ENCODE measurements at regions of chr12 and their contacts with region 1.

Region 1: DNA sequence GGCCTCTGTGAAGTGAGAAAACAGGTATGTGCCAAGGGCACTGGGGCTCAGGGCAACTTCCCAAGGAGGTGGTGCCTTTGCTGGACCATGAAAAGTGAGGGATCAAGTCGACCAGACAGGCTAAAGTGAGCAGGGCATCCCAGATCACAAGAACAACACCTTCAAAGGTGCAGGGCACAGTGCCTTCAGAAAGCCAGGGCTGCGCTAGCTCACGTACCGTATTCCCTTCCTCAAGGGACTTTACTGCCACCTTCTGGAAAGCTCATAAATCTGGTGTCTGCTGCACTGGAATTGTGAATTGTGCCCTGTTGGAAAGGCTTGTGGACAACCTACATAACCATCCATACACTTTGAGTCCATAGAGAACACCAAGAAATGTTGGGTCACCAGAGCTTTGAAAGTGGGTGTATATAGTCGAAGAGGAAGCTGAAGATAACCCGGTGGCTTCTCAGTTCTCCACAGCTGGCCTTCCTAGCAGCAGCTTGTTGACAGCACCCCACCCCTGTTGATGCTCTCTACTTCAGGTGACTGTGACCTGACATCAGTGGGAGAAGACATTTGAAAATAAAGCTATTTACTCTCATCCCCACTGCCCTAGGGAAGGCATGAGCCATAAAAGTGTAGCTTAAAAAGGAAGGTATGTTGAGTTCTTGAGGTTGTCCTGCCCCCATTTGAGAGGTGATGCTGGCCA is 24.5 kb downstream of the FIGNL2 start:
- DNase-seq: peak; percentile 53
- H3K27ac ChIP-seq: no peak overlapping the region
- CTCF ChIP-seq: peak; percentile 64

Region 2: DNA sequence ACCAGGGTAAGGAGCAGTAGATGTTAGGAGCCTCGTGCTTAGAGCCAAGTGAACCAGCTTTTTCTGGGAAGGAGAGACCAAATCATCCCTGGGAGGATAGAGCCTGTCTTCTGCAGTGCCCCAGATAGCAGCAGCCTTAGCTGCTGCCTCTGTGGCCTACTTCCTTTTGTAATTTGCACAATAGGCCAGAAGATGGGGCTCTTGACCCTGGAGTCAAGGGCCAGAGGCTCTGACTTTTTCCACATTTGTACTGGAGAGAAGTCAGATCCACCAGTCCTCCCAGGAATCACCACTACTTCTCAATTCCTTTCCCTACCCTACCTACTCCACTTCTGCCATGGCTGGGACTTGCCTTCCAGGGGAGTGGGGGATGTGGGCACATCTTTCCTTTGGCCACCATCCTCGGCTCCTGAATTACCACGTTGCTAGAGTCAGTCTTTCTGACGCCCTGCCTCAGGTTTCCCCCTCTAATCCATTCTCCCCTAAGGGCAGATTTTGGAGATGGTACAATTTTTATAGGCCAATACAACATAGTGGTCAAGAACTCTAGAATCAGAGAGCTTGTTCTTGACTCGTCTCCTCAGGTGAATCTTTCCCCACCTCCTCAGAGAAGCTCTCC is 402.6 kb before region 1 on chr12:
- CTCF ChIA-PET with region 1: interaction called, 27 read pairs
- POLR2A ChIA-PET with region 1: no interaction called
- DNase-seq: peak; percentile 59
- H3K27ac ChIP-seq: no peak overlapping the region
- CTCF ChIP-seq: peak; percentile 43

Measured in RWPE1 (cell line).